ENCODE measurements at regions of chr12 and their contacts with region 1.

Region 1: GRCh38 chr12:108562348-108563135 is at the start of gene ISCU:
- DNase-seq: peak; percentile 95
- ATAC-seq: peak; percentile 86
- H3K4me3 ChIP-seq: peak within 1 kb of the TSS; percentile 92
- H3K27ac ChIP-seq: peak within 1 kb of the TSS; percentile 89
- H3K4me1 ChIP-seq: no peaks in the 10 kb centered on the region
- H3K27me3 ChIP-seq: no peaks in the 10 kb centered on the region
- CTCF ChIP-seq: no peak
- POLR2A ChIP-seq: peak; percentile 88
- RAD21 ChIP-seq: no peak
- total RNA-seq, gene ISCU: 52.7 and 58.3 TPM in 2 replicates

Region 2: GRCh38 chr12:108514973-108515814 is 47.3 kb before region 1 on chr12 and contains the start of gene FICD:
- CTCF ChIA-PET with region 1: no interaction called
- POLR2A ChIA-PET with region 1: no interaction called
- dilution Hi-C with region 1: no loop called
- in situ Hi-C with region 1: no loop called
- intact Hi-C with region 1: no loop called
- DNase-seq: peak; percentile 96
- ATAC-seq: peak; percentile 97
- H3K4me3 ChIP-seq: peak within 1 kb of the TSS; percentile 74
- H3K27ac ChIP-seq: peak within 1 kb of the TSS; percentile 41; the same call in 1 of the 2 replicates
- H3K4me1 ChIP-seq: peaks cover 3% of the 10 kb centered on the region
- H3K27me3 ChIP-seq: no peaks in the 10 kb centered on the region; the same call in 1 of the 2 replicates
- CTCF ChIP-seq: no peak
- POLR2A ChIP-seq: peak; percentile 77
- RAD21 ChIP-seq: no peak
- total RNA-seq, gene FICD: 10.8 and 11.3 TPM in 2 replicates

Region 3: DNA sequence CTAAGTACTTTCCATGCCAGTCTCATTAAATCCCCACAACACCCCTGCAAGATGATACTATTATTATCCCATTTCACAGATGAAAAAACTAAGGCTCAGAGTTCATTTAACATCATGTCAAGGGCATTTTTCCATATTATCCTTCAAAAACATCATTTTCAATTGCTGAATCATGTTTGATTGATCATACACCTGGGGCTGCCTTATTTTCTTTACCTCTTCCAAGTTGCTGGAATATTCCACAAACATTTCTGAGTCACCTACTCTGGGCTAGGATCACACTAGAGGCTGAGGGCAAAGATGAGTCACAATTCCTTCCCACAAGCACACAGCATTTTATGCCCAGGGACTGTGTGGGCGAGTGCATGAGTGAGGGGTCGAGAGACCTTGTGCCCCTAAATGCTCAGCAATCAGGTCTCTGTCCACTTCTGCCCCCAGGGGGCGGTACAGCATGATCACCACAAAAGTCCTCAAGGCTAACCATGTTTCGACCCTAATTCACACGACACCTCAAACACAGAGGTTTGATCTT is 49.4 kb after region 1 on chr12:
- CTCF ChIA-PET with region 1: interaction called, 37 read pairs
- POLR2A ChIA-PET with region 1: interaction called, 3 read pairs
- dilution Hi-C with region 1: no loop called
- in situ Hi-C with region 1: loop called (anchors 5 kb)
- intact Hi-C with region 1: loop called (anchors 2 kb)
- DNase-seq: peak; percentile 89
- ATAC-seq: peak; percentile 55
- H3K4me3 ChIP-seq: no peak overlapping the region
- H3K27ac ChIP-seq: no peak overlapping the region
- H3K4me1 ChIP-seq: peaks cover 16% of the 10 kb centered on the region
- H3K27me3 ChIP-seq: no peaks in the 10 kb centered on the region
- CTCF ChIP-seq: peak; percentile 47
- POLR2A ChIP-seq: no peak
- RAD21 ChIP-seq: peak; percentile 39

Region 4: DNA sequence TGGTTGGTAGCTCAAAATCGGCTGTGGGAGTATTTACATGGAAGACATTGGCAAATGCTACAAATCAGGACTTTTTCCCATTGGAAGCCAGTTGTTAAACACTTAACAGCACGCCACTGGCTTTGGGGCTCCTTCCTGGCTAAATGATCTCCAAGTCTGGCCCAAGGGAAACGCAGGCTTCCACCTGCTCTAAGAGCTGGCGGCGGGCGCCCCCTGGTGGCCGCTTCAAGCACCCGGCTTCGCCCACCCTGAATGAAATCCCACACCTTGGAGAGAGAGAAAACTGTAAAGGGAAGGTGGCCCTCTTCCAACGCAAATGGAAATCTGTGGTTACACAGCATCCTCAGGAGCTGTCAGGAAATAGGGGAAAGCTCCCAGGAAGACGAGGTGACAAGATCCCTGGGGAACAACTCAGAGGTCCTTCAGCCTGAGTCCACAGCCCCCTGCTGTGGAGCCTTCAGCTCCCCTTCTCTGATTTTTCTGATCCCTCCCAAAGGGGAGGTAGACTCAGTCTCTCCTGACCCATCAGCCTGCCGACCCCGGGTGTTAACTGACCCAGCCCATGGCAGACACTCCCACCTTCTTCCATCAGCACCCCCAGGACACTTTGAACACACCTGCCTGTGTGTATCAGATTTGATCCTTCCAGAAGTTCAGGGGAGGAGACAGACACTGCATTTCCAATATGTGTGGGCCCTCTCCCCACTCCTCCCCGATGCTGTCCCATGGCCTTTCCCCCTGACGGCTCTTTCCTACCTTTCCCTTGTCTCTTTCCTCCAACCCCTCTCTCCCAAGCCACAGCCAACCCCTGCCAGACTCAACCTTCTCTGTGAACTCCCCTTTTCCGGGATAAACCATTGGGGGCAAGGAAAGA is 55.8 kb after region 1 on chr12:
- CTCF ChIA-PET with region 1: interaction called, 37 read pairs
- POLR2A ChIA-PET with region 1: no interaction called
- dilution Hi-C with region 1: no loop called
- in situ Hi-C with region 1: loop called (anchors 5 kb)
- intact Hi-C with region 1: loop called (anchors 1 kb)
- DNase-seq: peak; percentile 83
- ATAC-seq: peak; percentile 95
- H3K4me3 ChIP-seq: no peak overlapping the region
- H3K27ac ChIP-seq: no peak overlapping the region
- H3K4me1 ChIP-seq: peaks cover 3% of the 10 kb centered on the region; the same call in 1 of the 2 replicates
- H3K27me3 ChIP-seq: no peaks in the 10 kb centered on the region
- CTCF ChIP-seq: peak; percentile 97
- POLR2A ChIP-seq: peak; percentile 39; the same call in 1 of the 2 replicates
- RAD21 ChIP-seq: peak; percentile 98

Region 5: GRCh38 chr12:108666401-108666881 is 103.9 kb after region 1 on chr12:
- CTCF ChIA-PET with region 1: no interaction called
- POLR2A ChIA-PET with region 1: no interaction called
- dilution Hi-C with region 1: no loop called
- in situ Hi-C with region 1: no loop called
- intact Hi-C with region 1: no loop called
- DNase-seq: peak; percentile 51
- ATAC-seq: peak; percentile 14
- H3K4me3 ChIP-seq: no peak overlapping the region
- H3K27ac ChIP-seq: peak overlapping the region; percentile 62
- H3K4me1 ChIP-seq: peaks cover 28% of the 10 kb centered on the region
- H3K27me3 ChIP-seq: no peaks in the 10 kb centered on the region
- CTCF ChIP-seq: no peak
- POLR2A ChIP-seq: no peak
- RAD21 ChIP-seq: no peak

Measured in IMR-90 (cell line).